Heart right ventricle (tissue), 16 donors: ENCODE measurements at regions of chr9 and their contacts with region 1.

Region 1: GRCh38 chr9:2014696-2015580 is at the start of gene SMARCA2:
- DNase-seq: peak; percentile 98
- ATAC-seq: peak; percentile 87 to 96 (median 92)
- H3K4me3 ChIP-seq: peak within 1 kb of the TSS; percentile 62 to 97 (median 88)
- H3K27ac ChIP-seq: peak within 1 kb of the TSS; percentile 92 to 99 (median 97)
- H3K4me1 ChIP-seq: peaks cover 0 to 30% (median 23%) of the 10 kb centered on the region in 9 donors
- H3K27me3 ChIP-seq: no peaks in the 10 kb centered on the region
- CTCF ChIP-seq: peak in 1 of 9 donors; percentile 2
- total RNA-seq, gene SMARCA2: 76.1 to 140 (median 114) TPM

Region 2: GRCh38 chr9:1956958-1957357 is 58.0 kb before region 1 on chr9:
- intact Hi-C with region 1: no loop called
- DNase-seq: no peak
- ATAC-seq: no peak
- H3K4me3 ChIP-seq: no peak overlapping the region
- H3K27ac ChIP-seq: no peak overlapping the region
- H3K4me1 ChIP-seq: peaks cover 0 to 15% (median 7%) of the 10 kb centered on the region in 9 donors
- H3K27me3 ChIP-seq: no peaks in the 10 kb centered on the region
- CTCF ChIP-seq: no peak

Region 3: DNA sequence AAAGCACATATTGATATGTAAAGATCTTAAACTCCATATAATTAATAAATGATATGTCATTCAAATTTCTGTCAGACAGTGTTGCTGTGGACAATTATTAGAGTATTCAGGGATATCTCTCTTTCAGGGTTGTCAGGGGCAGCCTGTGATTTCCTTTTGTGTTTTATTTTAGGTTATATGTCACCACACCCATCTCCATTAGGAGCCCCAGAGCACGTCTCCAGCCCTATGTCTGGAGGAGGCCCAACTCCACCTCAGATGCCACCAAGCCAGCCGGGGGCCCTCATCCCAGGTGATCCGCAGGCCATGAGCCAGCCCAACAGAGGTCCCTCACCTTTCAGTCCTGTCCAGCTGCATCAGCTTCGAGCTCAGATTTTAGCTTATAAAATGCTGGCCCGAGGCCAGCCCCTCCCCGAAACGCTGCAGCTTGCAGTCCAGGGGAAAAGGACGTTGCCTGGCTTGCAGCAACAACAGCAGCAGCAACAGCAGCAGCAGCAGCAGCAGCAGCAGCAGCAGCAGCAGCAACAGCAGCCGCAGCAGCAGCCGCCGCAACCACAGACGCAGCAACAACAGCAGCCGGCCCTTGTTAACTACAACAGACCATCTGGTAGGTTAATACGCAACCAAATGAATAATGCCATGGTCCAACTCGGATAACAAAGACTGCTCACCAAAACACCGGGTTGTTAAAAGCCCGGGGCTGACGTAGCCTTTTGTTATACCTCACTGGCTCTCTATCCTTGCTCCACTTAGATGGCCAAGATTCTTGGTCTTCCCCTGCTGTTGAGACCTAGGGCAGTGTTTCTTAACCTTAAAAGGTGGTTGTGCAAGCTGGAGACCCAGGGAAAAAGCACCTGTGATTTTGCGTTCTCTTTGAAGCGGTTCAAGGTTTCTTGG is 24.6 kb after region 1 on chr9:
- intact Hi-C with region 1: loop called in 1 of 10 experiments (anchors 2 kb)
- DNase-seq: peak in 1 of 2 donors; percentile 28
- ATAC-seq: peak in 6 of 8 donors; percentile 32 to 80 (median 66)
- H3K4me3 ChIP-seq: peak overlapping the region in 2 of 10 donors; percentile 10 to 16
- H3K27ac ChIP-seq: peak overlapping the region in 8 of 10 donors; percentile 2 to 61 (median 16)
- H3K4me1 ChIP-seq: peaks cover 0 to 53% (median 26%) of the 10 kb centered on the region in 9 donors
- H3K27me3 ChIP-seq: no peaks in the 10 kb centered on the region
- CTCF ChIP-seq: no peak

Region 4: GRCh38 chr9:2060424-2060823 is 45.5 kb after region 1 on chr9:
- intact Hi-C with region 1: loop called in 5 of 10 experiments (anchors 5 to 10 kb)
- DNase-seq: peak in 1 of 2 donors; percentile 32
- ATAC-seq: peak in 7 of 8 donors; percentile 53 to 95 (median 86)
- H3K4me3 ChIP-seq: no peak overlapping the region
- H3K27ac ChIP-seq: no peak overlapping the region
- H3K4me1 ChIP-seq: peaks cover 0 to 17% (median 1%) of the 10 kb centered on the region in 9 donors
- H3K27me3 ChIP-seq: no peaks in the 10 kb centered on the region
- CTCF ChIP-seq: no peak

Region 5: DNA sequence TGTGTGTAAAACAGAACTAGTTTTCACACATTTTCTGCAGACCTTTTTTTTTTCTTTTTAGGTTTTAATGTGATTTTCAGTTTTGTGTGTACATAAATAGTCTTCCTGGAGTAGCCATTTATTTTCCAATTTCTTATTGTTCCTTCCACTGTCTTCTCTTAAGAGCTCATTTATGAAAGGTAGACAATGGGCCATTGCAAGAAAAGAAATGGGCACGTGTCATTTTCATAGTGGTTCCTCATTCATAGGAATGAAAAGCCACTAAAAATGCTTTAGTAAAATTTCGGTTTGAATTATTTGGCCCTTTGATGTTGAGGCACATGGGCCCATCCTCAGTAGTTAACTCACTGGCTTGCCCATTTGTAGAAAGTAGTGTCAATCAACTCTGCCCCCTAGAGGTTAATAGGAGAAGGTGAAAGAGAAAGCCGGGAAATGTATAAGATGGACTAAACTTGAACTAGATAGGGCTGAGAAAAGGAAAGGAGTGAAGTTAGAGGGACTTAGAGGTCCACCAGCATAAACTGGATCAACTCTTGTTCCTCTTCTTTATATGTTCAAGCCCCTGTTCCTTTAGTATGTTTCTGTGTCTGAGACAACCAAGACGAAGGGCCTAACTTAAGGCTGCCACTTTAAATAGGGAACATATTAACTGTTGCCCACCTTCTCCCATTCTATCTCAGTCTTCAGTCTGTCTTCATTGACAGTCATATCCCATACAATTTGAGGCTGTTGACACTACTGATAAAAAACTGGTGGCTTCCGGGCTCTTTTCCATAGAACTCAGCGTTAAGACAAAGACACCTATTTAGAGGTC is 72.8 kb after region 1 on chr9:
- intact Hi-C with region 1: loop called in 1 of 10 experiments (anchors 5 kb)
- DNase-seq: no peak
- ATAC-seq: peak in 2 of 8 donors; percentile 30 to 49
- H3K4me3 ChIP-seq: no peak overlapping the region
- H3K27ac ChIP-seq: no peak overlapping the region
- H3K4me1 ChIP-seq: peaks cover 0 to 19% (median 13%) of the 10 kb centered on the region in 9 donors
- H3K27me3 ChIP-seq: no peaks in the 10 kb centered on the region
- CTCF ChIP-seq: peak; percentile 25 to 68 (median 59)

Region 6: DNA sequence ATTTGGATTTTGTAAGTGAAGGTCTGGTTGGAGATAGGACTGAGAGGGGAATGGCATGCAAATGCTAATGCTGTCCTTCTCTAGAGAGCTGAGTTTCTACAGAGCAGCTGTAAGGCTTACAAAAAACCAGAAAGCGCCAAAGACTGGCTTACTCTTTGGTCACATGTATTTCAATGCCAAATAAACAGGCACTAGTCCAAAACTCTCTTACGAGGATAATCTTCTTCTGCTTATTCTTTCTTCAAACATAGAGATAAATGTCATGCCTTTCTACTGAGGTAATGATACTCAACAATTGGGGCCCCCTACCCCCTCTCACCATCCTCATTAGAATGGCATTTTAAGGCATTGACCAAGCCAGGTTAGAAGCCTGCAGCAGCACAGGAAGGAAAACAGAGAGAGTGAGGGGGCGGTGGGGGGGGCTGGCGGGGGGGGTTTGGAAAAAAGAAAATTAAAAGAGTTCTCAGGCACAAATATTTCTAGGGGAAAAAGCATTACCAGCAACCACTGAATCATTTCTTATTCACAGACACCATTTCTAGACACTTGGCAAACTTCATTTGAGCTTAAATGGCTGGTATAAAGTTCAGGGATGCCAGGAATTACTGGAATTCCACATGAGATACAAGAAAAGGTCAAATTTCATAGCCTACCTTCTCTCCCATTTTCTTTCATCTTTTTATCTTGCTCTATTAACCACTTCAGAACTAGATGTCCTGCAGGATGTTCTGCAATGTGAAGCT is 794.9 kb after region 1 on chr9:
- intact Hi-C with region 1: loop called in 1 of 10 experiments (anchors 10 kb)
- DNase-seq: peak in 1 of 2 donors; percentile 23
- ATAC-seq: peak; percentile 65 to 90 (median 82)
- H3K4me3 ChIP-seq: peak overlapping the region in 1 of 10 donors; percentile 3
- H3K27ac ChIP-seq: peak overlapping the region in 8 of 10 donors; percentile 53 to 88 (median 70)
- H3K4me1 ChIP-seq: peaks cover 5 to 26% (median 19%) of the 10 kb centered on the region in 9 donors
- H3K27me3 ChIP-seq: no peaks in the 10 kb centered on the region
- CTCF ChIP-seq: no peak